Gastrocnemius medialis (tissue), 4 donors: ENCODE measurements at regions of chr5 and their contacts with region 1.

Region 1: GRCh38 chr5:110757118-110757729 is 18.4 kb downstream of the SLC25A46 start:
- DNase-seq: no peak
- ATAC-seq: peak in 1 of 2 donors; percentile 49
- H3K4me3 ChIP-seq: no peak overlapping the region
- H3K27ac ChIP-seq: no peak overlapping the region
- H3K4me1 ChIP-seq: no peaks in the 10 kb centered on the region
- H3K27me3 ChIP-seq: no peaks in the 10 kb centered on the region
- CTCF ChIP-seq: peak; percentile 22 to 71 (median 30)
- POLR2A ChIP-seq: no peak

Region 2: DNA sequence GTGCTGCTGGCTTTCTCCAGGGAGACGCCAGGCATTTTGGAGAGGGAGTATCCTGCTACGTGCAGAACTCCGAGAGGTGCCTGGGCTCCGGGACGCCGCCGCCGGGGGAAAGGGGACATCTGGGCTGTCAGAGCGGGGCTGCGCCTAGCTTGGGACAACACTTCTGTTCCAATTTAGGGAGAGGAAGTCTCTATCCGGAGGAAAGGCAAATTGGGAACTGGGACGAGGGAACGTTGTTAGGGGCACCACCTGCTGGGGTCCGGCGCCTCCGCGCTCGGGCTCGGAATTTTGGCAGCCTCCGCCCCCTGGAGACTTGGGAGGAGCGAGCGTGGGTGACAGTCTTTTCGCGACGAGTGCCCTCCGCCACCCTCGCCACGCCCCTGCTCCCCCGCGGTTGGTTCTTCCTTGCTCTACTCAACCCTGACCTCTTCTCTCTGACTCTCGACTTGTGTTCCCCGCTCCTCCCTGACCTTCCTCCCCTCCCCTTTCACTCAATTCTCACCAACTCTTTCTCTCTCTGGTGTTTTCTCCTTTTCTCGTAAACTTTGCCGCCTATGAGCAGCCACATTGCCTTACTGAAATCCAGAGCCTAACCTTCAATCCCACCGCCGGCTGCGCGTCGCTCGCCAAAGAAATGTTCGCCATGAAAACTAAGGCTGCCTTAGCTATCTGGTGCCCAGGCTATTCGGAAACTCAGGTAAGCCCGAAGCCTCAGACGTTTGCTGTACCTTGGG is 315.9 kb after region 1 on chr5:
- in situ Hi-C with region 1: loop called in 2 of 4 experiments (anchors 25 kb)
- intact Hi-C with region 1: no loop called
- DNase-seq: peak; percentile 58 to 64
- ATAC-seq: peak; percentile 82 to 93
- H3K4me3 ChIP-seq: peak overlapping the region; percentile 52 to 71 (median 64)
- H3K27ac ChIP-seq: peak overlapping the region; percentile 26 to 57 (median 34)
- H3K4me1 ChIP-seq: peaks cover 7 to 8% of the 10 kb centered on the region in 2 donors
- H3K27me3 ChIP-seq: peaks cover 3 to 27% (median 8%) of the 10 kb centered on the region in 3 donors
- CTCF ChIP-seq: no peak
- POLR2A ChIP-seq: no peak

Region 3: GRCh38 chr5:111092062-111092853 is 335.0 kb after region 1 on chr5 and contains the start of gene WDR36:
- in situ Hi-C with region 1: loop called in 1 of 4 experiments (anchors 25 kb)
- intact Hi-C with region 1: no loop called
- DNase-seq: peak; percentile 75 to 82
- ATAC-seq: peak; percentile 99 to 100
- H3K4me3 ChIP-seq: peak within 1 kb of the TSS; percentile 87 to 97 (median 94)
- H3K27ac ChIP-seq: peak within 1 kb of the TSS; percentile 87 to 91 (median 90)
- H3K4me1 ChIP-seq: peaks cover 19 to 24% of the 10 kb centered on the region in 2 donors
- H3K27me3 ChIP-seq: no peaks in the 10 kb centered on the region
- CTCF ChIP-seq: no peak
- POLR2A ChIP-seq: peak; percentile 31 to 40
- total RNA-seq, gene WDR36: 13.6 to 28.2 (median 22.3) TPM

Region 4: GRCh38 chr5:111116550-111116949 is 359.3 kb after region 1 on chr5:
- in situ Hi-C with region 1: loop called in 1 of 4 experiments (anchors 25 kb)
- intact Hi-C with region 1: no loop called
- DNase-seq: no peak
- ATAC-seq: no peak
- H3K4me3 ChIP-seq: no peak overlapping the region
- H3K27ac ChIP-seq: no peak overlapping the region
- H3K4me1 ChIP-seq: no peaks in the 10 kb centered on the region
- H3K27me3 ChIP-seq: no peaks in the 10 kb centered on the region
- CTCF ChIP-seq: no peak
- POLR2A ChIP-seq: no peak